ENCODE measurements at regions of chr16 and their contacts with region 1.

Region 1: DNA sequence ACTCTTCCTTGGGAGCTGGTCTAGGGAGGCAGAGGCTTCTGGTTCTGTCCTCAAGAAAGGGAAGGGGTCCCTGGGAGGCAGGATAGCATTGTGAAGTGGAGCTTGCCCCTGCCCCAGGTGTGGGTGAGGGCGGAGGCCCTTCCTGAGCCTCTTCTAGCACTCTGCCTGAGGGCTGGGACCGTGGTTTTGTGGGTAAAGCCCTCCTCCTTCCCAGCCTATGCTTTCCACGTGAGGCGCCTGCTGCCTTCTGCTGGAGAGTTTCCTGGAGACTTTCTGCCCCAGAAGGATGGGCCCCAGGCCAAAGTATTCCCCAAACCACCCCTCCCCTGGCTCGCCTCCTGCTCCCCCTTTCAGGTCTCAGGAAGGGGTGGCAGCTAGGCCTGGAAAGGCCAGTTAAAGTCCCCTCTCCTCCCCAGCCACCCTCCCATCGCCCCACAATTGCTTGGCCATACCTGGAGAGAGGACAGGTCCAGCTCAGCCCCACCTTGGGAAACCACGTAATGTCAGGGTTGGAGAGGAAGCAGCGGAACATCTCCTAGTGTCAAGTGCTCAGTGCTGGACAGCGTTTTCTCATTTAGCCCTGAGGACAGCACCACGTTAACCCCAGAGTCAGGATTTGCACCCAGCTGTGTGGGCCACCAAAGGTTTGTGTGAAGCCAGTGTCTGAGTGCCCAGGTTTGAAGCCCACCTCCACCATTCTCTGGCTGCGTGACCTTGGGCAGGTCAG is 5.6 kb downstream of the SBK1 start:
- DNase-seq: no peak
- CTCF ChIP-seq: no peak

Region 2: GRCh38 chr16:28317040-28317880 is 19.3 kb after region 1 on chr16:
- CTCF ChIA-PET with region 1: interaction called, 12 read pairs
- POLR2A ChIA-PET with region 1: no interaction called
- DNase-seq: peak; percentile 83
- CTCF ChIP-seq: peak; percentile 73

Measured in GM10248 (cell line).